Sciatic nerve (tissue), 2 donors: ENCODE measurements at regions of chrX and their contacts with region 1.

Region 1: GRCh38 chrX:9995855-9996339 is 28.7 kb downstream of the CLDN34 start:
- DNase-seq: peak; percentile 92
- ATAC-seq: peak; percentile 97

Region 2: GRCh38 chrX:9873952-9874351 is 121.9 kb before region 1 on chrX:
- intact Hi-C with region 1: loop called (anchors 10 kb)
- DNase-seq: no peak
- ATAC-seq: no peak

Region 3: DNA sequence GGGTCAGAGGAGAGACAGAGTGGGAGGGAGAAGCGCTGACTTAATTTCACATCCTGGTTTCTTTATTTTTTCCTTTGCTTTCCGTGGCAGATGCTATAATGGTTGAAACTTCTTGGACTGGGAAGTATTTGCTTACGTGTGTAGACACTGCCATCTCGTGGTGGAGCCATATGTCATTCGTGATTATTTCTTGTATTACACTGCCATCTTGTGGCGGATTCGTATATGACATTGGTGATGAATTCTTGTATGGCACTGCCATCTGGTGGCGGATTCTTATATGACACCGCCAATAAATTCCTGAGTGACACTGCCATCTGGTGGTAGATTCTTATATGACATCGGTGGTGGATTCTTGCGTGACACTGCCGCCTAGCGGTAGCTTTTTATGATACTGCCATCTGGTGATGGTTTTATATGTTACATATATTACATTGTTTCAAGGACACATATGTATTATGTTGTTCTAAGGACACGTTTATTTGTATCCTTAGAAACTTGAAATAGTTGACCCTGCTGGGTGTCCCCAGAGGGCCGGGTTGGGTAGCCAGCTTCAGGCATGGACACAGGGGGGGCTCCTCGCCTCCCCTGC is 123.6 kb after region 1 on chrX:
- intact Hi-C with region 1: loop called (anchors 5 kb)
- DNase-seq: peak; percentile 84
- ATAC-seq: peak; percentile 77

Region 4: DNA sequence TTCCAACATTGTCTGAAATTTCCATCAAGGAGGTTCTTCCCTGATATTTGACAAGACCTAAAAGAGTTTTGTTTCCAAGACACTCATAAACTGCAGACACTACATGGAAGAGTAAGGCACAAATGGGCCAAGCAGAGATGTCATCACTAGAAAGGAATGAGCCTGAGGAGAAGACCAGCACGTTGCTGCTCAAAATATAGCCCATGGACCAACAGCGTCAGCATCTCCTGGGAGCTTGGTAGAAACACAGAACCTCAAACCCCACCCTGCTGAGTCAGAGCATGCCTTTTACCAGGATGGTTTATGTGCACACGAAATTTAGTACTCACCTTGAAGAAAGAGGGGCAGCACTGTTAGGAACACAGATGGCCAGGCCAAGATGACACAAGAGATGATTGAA is 753.2 kb after region 1 on chrX:
- intact Hi-C with region 1: no loop called
- DNase-seq: no peak
- ATAC-seq: no peak